ENCODE measurements at regions of chr22 and their contacts with region 1.

Region 1: DNA sequence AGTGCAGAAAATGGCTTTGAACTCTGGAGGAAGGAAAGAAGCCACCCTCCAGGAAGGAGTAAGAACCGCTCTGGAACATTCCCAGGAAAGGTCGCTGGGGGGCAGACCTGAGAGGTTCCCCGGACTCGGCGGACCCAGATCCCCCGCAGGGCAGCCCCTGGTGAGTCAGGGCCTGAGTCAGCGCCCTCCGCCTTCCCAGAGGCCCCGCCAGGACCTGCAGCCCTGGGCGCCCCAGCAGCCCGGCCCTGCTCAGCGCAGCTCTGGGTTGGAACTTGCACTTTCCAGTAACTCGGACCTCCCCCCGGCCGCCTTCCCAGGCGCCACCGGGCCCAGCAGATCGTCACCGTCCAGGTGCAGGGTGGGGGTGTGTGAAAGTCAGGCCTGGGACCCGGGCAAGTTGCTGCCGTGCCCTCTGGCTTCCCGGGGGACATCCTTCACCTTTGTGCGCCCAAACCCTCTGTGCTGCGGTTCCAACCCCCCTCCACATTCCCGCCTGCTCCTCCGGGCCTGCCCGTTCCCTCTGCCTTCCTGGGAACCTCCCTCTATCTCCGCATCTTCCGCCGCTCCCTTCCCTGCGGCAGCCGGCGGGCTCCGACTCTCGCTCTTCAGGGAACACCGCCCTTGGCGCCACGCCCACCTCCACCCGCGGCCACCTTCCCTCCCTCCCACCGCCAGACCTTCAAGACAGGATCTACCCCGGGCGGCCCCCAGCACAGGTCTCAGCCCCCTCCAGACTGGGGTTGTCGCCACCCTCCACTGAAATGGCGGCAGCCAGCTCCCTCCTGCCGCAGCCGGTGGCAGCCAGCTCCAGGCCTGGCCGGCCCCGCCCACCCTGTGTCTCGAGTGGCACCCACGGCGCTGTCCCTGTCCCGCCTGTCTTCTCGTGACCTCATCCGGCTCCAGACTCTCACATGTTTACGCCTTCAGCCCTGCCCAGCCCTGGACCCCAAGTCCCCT is 36.8 kb upstream of the WNT7B start:
- DNase-seq: peak; percentile 94 to 98 (median 96)
- ATAC-seq: peak; percentile 91 to 95 (median 92)
- H3K4me3 ChIP-seq: peak overlapping the region; percentile 33 to 57 (median 47)
- H3K27ac ChIP-seq: peak overlapping the region; percentile 84 to 99 (median 94)
- H3K4me1 ChIP-seq: peaks cover 0 to 18% (median 10%) of the 10 kb centered on the region in 3 donors
- H3K27me3 ChIP-seq: no peaks in the 10 kb centered on the region
- CTCF ChIP-seq: peak; percentile 45 to 69 (median 65)

Region 2: DNA sequence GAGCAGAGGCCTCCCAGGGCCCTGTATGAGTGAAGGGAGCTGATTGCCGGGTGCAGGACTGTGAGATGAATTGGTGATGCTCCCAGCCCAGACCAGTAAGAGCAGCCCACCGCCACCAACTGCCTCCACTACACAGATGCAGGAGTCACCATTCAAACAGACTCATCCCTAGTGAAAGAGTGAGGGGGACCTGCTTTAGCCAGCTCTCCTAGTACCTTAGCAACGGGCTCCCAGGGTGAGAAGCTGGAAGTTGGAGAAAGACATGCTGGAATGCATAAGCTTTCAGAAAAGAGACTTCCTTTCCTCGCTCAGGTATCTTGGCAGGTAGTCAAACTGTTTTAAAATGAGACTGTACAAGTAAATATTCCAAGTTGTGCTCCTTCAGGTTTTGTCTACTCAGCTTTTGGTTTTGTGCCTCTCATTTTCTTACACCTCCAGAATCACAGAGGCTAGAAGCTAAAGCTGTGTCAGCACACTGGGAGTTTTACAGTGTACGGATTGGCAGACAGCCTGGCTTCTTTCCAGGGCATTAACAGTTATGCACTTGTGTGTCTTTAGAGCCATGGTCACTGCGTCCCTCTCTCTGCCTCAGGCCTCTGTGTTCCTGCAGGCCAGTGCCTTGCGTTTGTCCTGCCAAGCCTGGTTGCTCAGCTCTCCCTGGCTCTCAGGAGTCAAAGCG is 195.9 kb before region 1 on chr22:
- intact Hi-C with region 1: no loop called
- DNase-seq: peak in 2 of 6 donors; percentile 24 to 27
- ATAC-seq: peak; percentile 55 to 87 (median 75)
- H3K4me3 ChIP-seq: no peak overlapping the region
- H3K27ac ChIP-seq: peak overlapping the region in 1 of 4 donors; percentile 1
- H3K4me1 ChIP-seq: no peaks in the 10 kb centered on the region
- H3K27me3 ChIP-seq: no peaks in the 10 kb centered on the region
- CTCF ChIP-seq: no peak

Region 3: DNA sequence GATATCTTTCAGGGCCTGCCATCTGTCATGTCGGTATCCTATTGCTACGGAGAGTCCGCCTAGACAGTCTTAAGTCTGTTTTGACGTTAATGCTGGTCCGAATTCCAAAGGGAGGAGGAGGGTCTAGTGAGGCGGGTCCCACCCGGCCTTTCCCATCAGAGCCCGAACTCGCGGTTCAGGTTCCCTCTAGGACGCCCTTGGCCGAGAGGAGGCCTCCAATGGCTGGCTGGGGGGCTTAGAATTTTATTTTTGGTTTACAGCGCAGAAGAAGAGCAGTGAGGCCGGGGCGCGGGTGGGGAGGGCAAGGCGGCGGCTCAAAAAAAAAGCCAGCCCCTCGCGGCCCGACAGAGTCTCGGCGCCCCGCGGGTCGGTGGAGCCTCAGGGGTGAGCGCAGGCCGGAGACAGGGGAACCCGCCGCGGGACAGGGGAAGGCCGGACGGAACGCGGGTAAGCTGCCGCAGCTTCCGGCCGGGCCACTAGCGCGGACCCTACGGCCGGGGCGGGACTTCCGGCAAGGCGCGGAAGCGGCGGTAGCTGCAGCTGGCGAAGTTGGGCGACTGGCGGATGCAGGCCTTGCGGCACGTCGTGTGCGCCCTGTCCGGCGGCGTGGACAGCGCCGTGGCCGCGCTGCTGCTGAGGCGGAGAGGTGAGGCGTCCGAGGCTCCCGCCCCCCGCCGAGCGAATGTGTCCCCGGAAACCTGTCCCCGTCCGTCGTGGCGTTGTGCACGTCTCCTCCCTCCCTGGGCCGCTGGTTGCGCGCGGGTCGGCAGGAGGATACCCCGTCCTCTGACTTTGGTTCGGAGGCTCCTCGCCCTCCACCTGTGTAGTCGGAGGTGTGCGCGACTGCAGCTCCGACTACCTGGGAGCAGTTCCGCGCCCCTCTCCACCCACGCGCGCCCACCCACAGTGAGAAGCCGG is 321.7 kb after region 1 on chr22 and contains the start of gene TRMU:
- intact Hi-C with region 1: loop called in 1 of 3 experiments (anchors 10 kb)
- DNase-seq: peak; percentile 81 to 95 (median 88)
- ATAC-seq: peak; percentile 94 to 97 (median 96)
- H3K4me3 ChIP-seq: peak within 1 kb of the TSS; percentile 53 to 96 (median 86)
- H3K27ac ChIP-seq: peak within 1 kb of the TSS; percentile 75 to 91 (median 87)
- H3K4me1 ChIP-seq: peaks cover 0 to 11% (median 5%) of the 10 kb centered on the region in 3 donors
- H3K27me3 ChIP-seq: no peaks in the 10 kb centered on the region
- CTCF ChIP-seq: no peak
- total RNA-seq, gene TRMU: 15.0 to 27.6 (median 20.8) TPM

Measured in pancreas (tissue), 10 donors.